ENCODE measurements at regions of chr6 and their contacts with region 1.

Region 1: DNA sequence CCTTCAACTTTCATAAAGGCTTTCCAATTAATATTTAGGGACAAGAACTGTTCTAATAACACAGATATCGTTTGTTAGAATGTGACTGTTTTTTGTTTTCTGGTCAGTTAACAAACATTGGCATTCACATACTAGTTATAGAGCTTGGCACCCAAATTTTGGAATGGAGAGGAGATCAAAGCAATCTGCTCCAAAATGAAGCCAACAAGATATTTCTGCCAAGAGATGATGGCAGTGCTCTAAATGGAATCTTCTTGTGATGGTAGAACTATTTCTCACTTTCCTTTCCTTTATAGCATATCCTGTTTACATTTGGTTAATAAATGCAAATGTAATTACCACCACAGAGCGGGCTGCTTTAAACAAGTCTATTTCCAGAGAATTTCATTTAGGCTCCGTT is 208.3 kb upstream of the RIMS1 start:
- DNase-seq: no peak
- ATAC-seq: no peak
- H3K4me3 ChIP-seq: no peak overlapping the region
- H3K27ac ChIP-seq: no peak overlapping the region
- H3K4me1 ChIP-seq: no peaks in the 10 kb centered on the region
- H3K27me3 ChIP-seq: no peaks in the 10 kb centered on the region
- CTCF ChIP-seq: no peak
- POLR2A ChIP-seq: no peak
- RAD21 ChIP-seq: no peak

Region 2: GRCh38 chr6:71533939-71534379 is 144.1 kb before region 1 on chr6:
- CTCF ChIA-PET with region 1: no interaction called
- POLR2A ChIA-PET with region 1: no interaction called
- RAD21 ChIA-PET with region 1: no interaction called
- intact Hi-C with region 1: no loop called
- DNase-seq: peak; percentile 3
- ATAC-seq: no peak
- H3K4me3 ChIP-seq: no peak overlapping the region
- H3K27ac ChIP-seq: no peak overlapping the region
- H3K4me1 ChIP-seq: no peaks in the 10 kb centered on the region
- H3K27me3 ChIP-seq: no peaks in the 10 kb centered on the region; the same call in 1 of the 2 replicates
- CTCF ChIP-seq: peak in 2 of 3 experiments; percentile 41 to 44; a peak in 4 of 6 replicates
- POLR2A ChIP-seq: no peak
- RAD21 ChIP-seq: peak; percentile 44; the same call in 1 of the 2 replicates

Region 3: DNA sequence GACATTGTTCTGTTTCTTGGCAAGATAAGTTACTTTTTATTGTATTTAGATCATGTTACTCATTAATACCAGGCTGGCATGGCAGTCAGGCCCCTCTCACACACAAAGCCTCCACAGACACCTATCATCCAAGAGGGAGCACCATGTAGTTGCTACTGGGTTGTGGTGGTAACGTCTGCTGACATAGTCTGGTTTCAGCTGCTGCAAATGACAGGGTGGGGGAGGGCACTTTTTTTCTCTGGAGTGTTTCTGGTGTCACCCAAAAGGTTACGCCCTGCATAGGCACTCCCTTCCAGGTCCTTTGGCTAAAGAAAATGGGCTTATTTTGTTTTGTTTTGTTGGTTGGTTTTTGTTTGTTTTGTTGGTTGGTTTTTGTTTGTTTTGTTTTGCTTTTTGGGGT is 28.2 kb before region 1 on chr6:
- CTCF ChIA-PET with region 1: no interaction called
- POLR2A ChIA-PET with region 1: no interaction called
- RAD21 ChIA-PET with region 1: no interaction called
- intact Hi-C with region 1: loop called (anchors 2 kb)
- DNase-seq: no peak
- ATAC-seq: no peak
- H3K4me3 ChIP-seq: no peak overlapping the region
- H3K27ac ChIP-seq: no peak overlapping the region
- H3K4me1 ChIP-seq: no peaks in the 10 kb centered on the region
- H3K27me3 ChIP-seq: no peaks in the 10 kb centered on the region
- CTCF ChIP-seq: no peak
- POLR2A ChIP-seq: no peak
- RAD21 ChIP-seq: no peak